Motor neuron (in vitro differentiated cells): ENCODE measurements at regions of chr22 and their contacts with region 1.

Region 1: DNA sequence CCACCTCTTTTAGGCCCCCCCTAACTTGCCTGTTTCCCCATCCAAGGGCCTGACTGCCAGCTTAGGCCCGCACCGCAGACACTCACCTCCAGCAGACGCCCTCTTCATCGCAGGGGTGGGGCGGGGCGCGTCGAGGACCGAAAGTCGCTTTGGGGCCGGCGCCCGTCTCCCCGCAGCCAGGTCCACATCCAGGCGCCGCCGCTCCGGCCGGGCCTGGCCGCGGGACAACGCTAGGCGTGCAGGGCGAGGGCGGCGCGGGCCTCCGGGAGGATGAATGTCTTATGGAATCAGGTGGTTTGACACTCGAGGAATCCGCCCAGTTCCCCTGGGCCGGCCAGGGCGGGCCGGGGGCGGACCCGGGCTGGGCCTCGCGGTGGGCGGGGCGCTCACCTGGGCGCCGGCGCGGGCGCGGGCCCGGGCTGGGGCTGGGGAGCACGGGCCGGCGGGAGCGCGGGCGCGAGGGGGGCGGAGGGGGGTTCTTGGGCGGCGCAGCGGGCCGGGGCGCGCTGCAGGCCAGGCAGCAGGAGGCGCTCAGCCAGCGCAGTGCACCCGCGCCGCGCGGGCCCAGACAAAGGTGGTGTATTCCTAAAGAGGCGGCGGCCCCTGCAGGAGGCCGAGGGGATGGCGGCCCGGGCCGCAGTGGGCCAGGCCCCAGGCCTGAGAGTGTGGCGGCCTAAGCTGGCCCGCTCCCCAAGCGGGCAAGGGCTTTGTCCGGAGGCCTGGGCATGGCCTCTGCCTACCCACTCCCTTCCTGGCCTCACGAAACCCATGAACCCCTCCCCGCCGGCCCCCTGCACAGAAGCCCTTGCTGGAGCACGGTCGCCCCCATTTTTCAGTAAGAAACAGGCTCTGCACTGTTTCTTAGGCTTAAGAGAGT is 177.6 kb downstream of the IGLL1 start:
- ATAC-seq: peak; percentile 73 to 95 (median 86)
- H3K4me3 ChIP-seq: peak overlapping the region in 4 of 5 donors; percentile 4 to 34 (median 23)
- H3K27ac ChIP-seq: peak overlapping the region; percentile 83 to 84
- H3K4me1 ChIP-seq: peaks cover 30 to 36% of the 10 kb centered on the region in 2 donors

Region 2: DNA sequence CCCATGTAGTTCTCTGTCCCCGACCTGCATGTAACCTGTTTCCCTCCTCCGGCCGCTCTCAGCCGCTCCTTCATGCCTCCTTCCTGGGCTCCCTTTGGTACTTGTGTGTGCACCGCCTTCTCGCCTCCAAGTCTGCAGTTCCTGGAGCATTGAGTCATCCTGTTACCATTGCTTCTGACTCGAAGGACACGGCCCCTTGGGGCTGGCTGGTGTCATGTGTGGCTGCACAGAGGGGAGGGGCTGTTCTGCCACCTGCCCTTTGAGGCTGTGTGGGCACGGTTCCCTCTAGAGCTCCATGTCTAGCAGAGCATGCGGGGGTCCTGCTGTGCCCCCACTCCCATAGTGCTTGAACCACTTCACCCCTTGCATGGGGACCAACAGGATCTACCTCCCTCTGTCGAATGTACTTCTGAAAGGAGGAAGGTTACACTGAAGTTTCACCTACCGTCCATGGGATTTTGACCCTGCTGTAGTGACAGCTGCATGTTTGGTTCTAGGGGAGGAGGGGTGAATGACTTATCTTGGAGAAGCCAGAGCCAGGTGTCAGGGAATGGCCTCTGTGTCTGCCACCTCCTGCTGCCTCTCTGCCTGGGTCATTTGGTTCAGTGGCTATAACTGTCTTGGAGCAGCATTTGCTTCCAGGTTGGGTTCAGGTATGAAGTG is 182.6 kb before region 1 on chr22:
- in situ Hi-C with region 1: no loop called
- ATAC-seq: peak; percentile 5 to 75 (median 43)
- H3K4me3 ChIP-seq: no peak overlapping the region
- H3K27ac ChIP-seq: peak overlapping the region; percentile 54 to 67
- H3K4me1 ChIP-seq: peaks cover 58 to 66% of the 10 kb centered on the region in 2 donors

Region 3: DNA sequence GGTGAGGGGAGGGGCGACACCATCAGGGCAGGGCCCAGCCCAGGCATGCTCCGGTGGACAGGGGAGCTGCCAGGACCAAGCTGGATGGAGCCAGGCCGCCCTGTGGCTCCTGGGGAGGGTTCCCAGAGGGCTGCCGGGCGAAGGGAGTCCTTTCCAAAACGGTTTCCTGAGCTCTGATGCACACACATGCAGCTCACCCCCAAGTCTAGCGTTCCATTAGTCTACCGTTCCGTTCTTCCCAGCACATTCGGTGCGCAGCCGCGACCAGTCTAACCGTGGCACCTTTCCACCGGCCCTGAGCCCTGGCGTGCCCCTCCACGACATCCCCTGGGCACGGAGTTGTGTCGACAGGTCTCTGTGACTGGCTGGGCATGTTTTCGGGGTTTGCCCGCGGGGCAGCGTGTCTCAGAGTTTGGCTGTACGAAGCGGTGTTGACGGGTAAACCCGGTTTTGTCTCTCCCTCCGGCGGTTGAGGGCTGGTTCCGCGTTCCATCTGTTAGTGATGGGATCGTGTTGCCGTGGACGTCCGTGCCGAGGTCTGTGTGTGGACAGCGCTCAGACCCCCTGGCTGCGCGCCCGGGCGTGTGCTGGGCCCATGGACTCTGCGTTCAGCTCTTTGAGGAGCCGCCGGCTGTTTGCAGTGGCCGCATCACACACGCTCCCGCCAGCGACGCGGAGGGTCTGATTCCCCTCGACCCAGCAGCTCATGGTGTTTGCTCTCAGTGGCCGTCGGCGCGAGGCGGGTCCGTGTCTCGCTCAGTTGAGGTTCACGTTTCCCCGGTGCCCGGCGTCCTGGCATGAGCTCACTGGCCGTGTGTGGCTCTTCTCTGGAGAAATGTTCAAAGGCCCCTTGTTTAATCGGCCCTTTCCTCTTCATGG is 56.4 kb after region 1 on chr22:
- in situ Hi-C with region 1: no loop called
- ATAC-seq: no peak
- H3K4me3 ChIP-seq: no peak overlapping the region
- H3K27ac ChIP-seq: no peak overlapping the region
- H3K4me1 ChIP-seq: peaks cover 22% of the 10 kb centered on the region in 2 donors

Region 4: DNA sequence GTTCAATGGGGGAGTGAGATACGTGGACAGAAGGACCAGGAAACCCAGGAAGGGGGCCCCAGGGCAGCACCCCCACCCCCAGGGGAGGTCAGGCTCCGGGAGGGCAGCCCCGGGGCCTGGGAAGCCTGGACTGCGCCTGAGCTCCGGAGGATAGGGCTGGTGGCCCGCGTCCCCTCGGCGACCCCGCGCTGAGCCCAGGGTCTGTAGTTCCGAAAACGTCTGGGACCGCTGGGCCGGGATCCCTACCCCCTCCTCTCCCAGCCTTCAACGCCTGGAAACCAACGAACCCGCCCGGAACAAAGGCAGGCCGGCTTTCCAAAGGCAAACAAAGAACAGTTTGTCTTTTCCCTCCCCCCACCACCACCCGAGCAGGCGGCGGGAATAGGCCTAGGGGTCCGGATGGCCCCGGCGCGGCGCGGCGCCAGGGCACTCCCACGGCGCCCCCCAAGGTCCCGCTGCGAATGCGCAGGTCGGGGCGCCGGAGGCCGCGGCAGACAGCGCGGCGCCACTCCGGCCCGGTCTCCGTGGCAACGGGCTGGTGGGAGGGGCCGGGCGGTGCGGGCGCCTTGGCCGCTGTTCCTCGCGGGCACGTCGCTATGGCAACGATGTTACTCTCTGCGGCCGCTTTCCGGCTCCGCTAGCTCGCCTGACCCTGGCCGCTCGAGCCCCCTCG is 119.1 kb after region 1 on chr22:
- in situ Hi-C with region 1: loop called in 1 of 9 experiments (anchors 25 kb)
- ATAC-seq: peak; percentile 84 to 94 (median 88)
- H3K4me3 ChIP-seq: peak overlapping the region; percentile 13 to 35 (median 18)
- H3K27ac ChIP-seq: peak overlapping the region; percentile 95 to 99
- H3K4me1 ChIP-seq: peaks cover 43 to 46% of the 10 kb centered on the region in 2 donors